Dorsolateral prefrontal cortex (tissue), 120 donors: ENCODE measurements at regions of chr4 and their contacts with region 1.

Region 1: DNA sequence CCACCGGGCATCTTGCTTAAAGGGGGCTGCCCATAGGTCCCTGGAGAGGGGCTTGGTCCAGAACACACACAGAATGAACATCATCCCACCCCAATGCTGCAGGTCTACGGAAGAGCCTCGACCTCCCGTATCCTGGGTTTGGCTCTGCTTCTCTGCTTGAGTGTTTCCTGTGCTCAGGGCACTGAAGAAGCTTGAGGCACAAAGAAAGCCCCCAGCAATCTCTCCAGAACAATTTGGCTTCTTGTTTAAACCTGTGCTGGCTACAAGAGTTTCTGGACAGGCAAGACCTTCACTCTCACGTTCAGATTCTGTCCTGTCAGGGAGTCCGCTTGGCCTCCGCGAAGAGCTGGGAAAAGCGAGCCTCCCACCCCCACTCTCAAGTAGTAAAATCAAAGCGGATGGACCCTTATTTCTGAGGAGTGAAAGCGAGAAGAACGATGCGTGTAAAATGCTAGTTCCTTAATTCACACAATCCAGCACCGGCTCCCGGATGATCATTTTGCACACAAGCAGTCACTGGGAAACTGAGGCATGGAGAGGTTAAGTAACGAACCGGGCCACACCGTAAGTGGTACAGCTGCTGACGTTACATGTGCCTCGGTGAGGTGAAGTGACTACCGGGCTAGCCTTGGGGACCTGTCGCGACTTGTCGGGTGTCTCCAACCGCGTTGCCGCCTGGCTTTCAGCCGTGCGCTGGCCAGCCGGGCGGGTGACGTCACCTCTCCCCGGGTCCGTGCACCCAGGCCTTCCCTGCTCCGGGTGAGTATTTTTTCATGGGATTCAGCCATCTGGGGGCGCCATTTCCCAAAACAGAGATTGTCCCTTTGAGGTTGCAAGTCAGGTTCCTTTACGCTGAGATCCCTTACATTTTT is 3.1 kb upstream of the SFRP2 start:
- DNase-seq: peak in 7 of 10 donors; percentile 38 to 72 (median 62)
- H3K4me3 ChIP-seq: peak overlapping the region in 58 of 59 donors; percentile 5 to 63 (median 47)
- H3K27ac ChIP-seq: peak overlapping the region in 1 of 59 donors; percentile 1
- H3K27me3 ChIP-seq: peaks cover 0 to 87% (median 53%) of the 10 kb centered on the region in 45 donors
- CTCF ChIP-seq: peak in 49 of 56 donors; percentile 15 to 56 (median 36)

Region 2: GRCh38 chr4:154314248-154314647 is 522.3 kb after region 1 on chr4:
- intact Hi-C with region 1: loop called (anchors 10 kb)
- DNase-seq: peak in 1 of 10 donors; percentile 40
- H3K4me3 ChIP-seq: no peak overlapping the region
- H3K27ac ChIP-seq: no peak overlapping the region
- H3K27me3 ChIP-seq: peaks cover 0 to 3% (median 0%) of the 10 kb centered on the region in 45 donors
- CTCF ChIP-seq: peak in 49 of 56 donors; percentile 18 to 66 (median 39)

Region 3: GRCh38 chr4:154526151-154526550 is 734.2 kb after region 1 on chr4:
- intact Hi-C with region 1: no loop called
- DNase-seq: no peak
- H3K4me3 ChIP-seq: no peak overlapping the region
- H3K27ac ChIP-seq: no peak overlapping the region
- H3K27me3 ChIP-seq: peaks cover 0 to 6% (median 0%) of the 10 kb centered on the region in 45 donors
- CTCF ChIP-seq: no peak